ENCODE measurements at regions of chr13 and their contacts with region 1.

Region 1: GRCh38 chr13:91313103-91313502 is 34.4 kb upstream of the MIR17HG start:
- DNase-seq: peak; percentile 30
- H3K4me3 Mint-ChIP-seq: no peak overlapping the region
- H3K27ac Mint-ChIP-seq: no peak overlapping the region
- H3K4me1 Mint-ChIP-seq: no peaks in the 10 kb centered on the region
- H3K27me3 Mint-ChIP-seq: peaks cover 82% of the 10 kb centered on the region
- CTCF ChIP-seq: peak; percentile 18

Region 2: GRCh38 chr13:91185294-91185863 is 127.7 kb before region 1 on chr13:
- CTCF ChIA-PET with region 1: no interaction called
- POLR2A ChIA-PET with region 1: no interaction called
- intact Hi-C with region 1: no loop called
- DNase-seq: peak; percentile 28
- H3K4me3 Mint-ChIP-seq: no peak overlapping the region
- H3K27ac Mint-ChIP-seq: no peak overlapping the region
- H3K4me1 Mint-ChIP-seq: no peaks in the 10 kb centered on the region
- H3K27me3 Mint-ChIP-seq: peaks cover 94% of the 10 kb centered on the region
- CTCF ChIP-seq: peak; percentile 37

Region 3: DNA sequence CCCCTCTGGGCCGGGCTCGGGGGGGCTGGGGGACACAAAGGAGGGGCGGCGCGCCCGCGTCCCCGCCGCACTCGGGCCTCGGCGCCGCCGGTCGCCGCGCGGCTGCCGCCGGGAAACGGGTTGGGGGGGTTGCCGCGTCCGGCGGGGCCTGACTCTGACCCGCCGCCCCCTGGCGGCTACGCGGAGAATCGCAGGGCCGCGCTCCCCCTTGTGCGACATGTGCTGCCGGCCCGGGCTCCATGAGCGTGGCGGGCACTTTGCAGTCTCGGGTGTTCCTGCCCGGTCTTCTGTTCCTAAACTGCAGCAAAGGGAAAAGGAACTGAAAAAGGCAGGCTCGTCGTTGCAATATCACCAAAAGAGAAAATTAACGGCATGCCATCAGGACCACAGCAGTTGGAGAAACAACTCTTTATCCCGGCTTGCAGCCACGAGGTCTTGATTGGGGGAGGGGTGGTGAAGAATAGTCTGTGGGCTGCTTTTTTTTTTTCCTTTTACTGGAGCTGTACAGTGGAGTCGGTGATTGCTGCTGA is 35.9 kb after region 1 on chr13:
- CTCF ChIA-PET with region 1: no interaction called
- POLR2A ChIA-PET with region 1: no interaction called
- intact Hi-C with region 1: loop called (anchors 2 kb)
- DNase-seq: peak; percentile 88
- H3K4me3 Mint-ChIP-seq: peak overlapping the region; percentile 92
- H3K27ac Mint-ChIP-seq: peak overlapping the region; percentile 86
- H3K4me1 Mint-ChIP-seq: peaks cover 20% of the 10 kb centered on the region
- H3K27me3 Mint-ChIP-seq: peaks cover 7% of the 10 kb centered on the region
- CTCF ChIP-seq: peak; percentile 94

Region 4: DNA sequence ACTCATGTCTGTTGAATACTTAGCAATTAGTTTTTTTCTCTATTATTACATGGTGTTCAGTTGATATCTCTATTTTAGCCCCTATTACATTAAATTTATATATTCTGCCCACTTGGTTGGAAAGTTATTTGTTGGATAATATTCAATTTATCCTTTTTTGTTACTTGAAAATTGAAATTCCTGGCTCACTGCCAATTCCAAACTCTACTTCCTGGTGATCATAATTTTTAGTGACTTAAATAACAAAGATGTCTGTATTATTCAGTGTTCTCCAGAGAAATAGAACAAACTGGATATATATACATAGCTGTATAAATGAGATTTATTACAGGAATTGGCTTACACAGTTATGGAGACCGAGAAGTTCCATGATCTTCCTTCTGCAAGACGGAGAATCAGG is 178.9 kb after region 1 on chr13:
- CTCF ChIA-PET with region 1: no interaction called
- POLR2A ChIA-PET with region 1: no interaction called
- intact Hi-C with region 1: no loop called
- DNase-seq: no peak
- H3K4me3 Mint-ChIP-seq: no peak overlapping the region
- H3K27ac Mint-ChIP-seq: no peak overlapping the region
- H3K4me1 Mint-ChIP-seq: no peaks in the 10 kb centered on the region
- H3K27me3 Mint-ChIP-seq: peaks cover 60% of the 10 kb centered on the region
- CTCF ChIP-seq: no peak

Measured in MCF 10A (cell line).